ENCODE measurements at regions of chr12 and their contacts with region 1.

Region 1: DNA sequence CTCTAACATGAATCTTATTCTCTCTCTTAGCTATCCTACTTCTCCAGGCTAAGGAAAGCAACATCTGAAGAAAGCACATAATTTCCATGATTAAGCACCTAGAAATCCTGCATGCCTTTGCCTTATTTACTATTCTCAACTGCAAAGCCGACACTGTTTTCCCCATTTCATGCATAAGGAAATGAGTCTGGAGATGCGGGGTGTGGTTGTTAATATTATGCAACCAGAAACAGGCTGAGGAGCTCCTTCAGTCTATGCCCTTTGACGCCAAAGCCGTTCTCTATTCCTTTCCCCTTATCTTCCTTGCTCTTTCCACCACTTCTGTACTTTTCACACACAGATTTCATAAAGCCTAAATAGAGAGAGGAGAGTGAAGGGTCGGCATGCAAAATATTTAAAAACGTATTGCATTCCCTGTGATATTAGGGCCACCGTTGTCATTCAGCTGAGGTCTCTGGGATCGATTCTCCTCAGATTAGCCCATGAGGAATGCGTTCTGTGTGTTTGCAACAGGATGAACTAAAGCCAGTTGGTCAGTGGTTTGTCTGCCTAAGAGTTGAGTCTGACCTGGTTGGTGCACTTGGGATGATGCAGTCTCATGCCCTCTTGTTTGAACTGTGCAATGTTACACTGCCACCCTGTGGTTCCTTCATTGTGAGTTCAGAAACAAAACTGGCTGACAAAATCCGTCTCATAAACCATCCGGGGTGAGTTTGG is 53.1 kb upstream of the PLEKHG7 start:
- DNase-seq: peak in 4 of 10 donors; percentile 22 to 79 (median 50)
- H3K4me3 ChIP-seq: no peak overlapping the region
- H3K27ac ChIP-seq: peak overlapping the region in 1 of 59 donors; percentile 31
- H3K27me3 ChIP-seq: no peaks in the 10 kb centered on the region
- CTCF ChIP-seq: peak; percentile 46 to 89 (median 74)

Region 2: DNA sequence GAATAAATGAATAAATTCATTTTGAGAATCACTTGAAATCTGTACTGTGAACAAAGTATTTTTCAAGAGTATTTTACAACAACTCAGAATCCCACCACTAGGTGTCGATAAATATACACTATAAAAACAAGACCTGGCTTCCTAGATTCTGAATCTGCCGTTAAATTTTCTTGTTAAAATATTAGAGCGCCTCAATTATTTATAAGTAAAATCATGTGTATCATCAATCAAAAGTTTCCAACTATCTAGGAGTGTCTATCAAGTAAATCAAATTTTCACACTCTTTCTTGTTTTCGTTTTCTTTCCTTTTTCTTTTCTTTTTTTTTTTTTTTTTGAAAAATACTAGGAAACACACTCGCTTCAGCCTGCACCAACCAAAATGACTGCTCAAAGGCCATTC is 1287.8 kb before region 1 on chr12:
- intact Hi-C with region 1: loop called in 1 of 2 experiments (anchors 5 kb)
- DNase-seq: no peak
- H3K4me3 ChIP-seq: peak overlapping the region in 18 of 59 donors; percentile 3 to 42 (median 20)
- H3K27ac ChIP-seq: peak overlapping the region in 1 of 59 donors; percentile 43
- H3K27me3 ChIP-seq: no peaks in the 10 kb centered on the region
- CTCF ChIP-seq: peak; percentile 69 to 94 (median 80)

Region 3: DNA sequence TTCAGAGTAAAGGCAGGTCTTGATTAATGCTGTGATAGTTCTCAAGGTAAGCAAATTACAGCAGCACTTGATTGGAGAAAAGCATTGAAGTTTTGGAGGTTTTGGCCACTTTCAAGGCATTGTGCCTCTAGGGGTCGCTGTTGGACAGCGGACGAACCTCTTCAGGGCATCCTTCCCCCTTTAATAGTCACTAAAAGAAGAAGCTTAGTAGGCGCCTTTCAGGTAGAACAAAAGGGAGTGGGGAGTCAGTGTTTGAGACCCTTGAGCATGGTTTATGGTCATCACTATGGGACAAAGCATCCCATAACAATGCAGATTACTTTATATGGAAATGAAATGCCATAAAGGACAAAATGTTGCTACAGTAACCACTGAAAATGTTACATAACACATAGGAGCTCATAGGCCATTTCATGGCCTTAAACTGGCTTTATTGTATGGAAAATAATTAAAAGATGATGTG is 1267.6 kb before region 1 on chr12:
- intact Hi-C with region 1: loop called (anchors 5 kb)
- DNase-seq: peak; percentile 77 to 93 (median 86)
- H3K4me3 ChIP-seq: peak overlapping the region; percentile 28 to 77 (median 60)
- H3K27ac ChIP-seq: peak overlapping the region; percentile 55 to 98 (median 92)
- H3K27me3 ChIP-seq: no peaks in the 10 kb centered on the region
- CTCF ChIP-seq: peak; percentile 81 to 99 (median 93)